A673 (cell line): ENCODE measurements at regions of chr10 and their contacts with region 1.

Region 1: DNA sequence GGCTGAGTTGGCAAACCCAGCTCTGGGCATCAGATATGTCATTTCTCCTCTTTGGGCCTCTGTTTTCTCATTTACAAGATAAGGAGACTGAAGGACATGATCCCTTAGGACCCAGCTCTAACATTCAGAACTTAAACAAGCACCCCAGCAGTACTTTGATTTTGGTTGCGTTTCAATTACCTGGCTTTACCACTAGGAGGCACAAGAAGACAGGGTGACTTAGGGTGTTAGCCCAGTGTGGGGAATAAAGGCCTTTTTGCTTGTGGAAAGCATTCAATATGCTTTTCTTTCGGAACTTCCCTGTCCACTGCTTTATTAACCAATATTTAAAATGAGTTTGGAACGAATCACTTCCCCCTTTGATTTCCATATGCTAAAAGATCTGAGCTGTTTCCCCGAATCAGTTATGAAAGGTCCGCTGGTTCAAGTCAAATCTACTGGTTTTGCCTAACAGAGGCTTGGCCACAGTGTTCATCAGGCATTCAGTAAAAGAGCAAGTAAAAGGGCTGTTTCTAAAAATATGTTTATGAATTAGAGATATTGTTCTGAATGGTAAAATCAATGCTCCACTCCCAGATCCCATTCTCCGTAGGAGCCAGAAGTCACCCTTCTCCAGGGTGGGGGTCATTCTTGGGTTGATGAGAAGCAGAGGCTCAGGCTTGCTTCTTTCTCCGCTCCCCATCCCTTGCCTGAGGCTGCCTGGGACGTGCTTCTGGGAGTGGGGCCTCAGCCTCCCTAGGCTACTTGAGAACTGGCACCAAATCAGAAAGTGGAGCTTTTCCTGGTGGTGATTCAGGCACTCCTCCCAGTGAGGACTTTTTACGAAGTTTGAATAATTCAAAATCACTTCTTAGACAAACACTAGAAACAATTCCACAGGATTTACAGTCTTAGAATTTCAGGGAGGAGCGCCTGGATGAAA is 105.5 kb downstream of the MYOF start:
- DNase-seq: peak; percentile 85
- H3K4me3 ChIP-seq: no peak overlapping the region
- H3K27ac ChIP-seq: no peak overlapping the region
- H3K4me1 ChIP-seq: peaks cover 11% of the 10 kb centered on the region
- H3K27me3 ChIP-seq: no peaks in the 10 kb centered on the region
- CTCF ChIP-seq: peak; percentile 86

Region 2: GRCh38 chr10:93458821-93459257 is 82.2 kb after region 1 on chr10:
- CTCF ChIA-PET with region 1: no interaction called
- POLR2A ChIA-PET with region 1: no interaction called
- intact Hi-C with region 1: no loop called
- DNase-seq: peak; percentile 87
- H3K4me3 ChIP-seq: no peak overlapping the region
- H3K27ac ChIP-seq: peak overlapping the region; percentile 63
- H3K4me1 ChIP-seq: peaks cover 16% of the 10 kb centered on the region
- H3K27me3 ChIP-seq: no peaks in the 10 kb centered on the region
- CTCF ChIP-seq: no peak

Region 3: GRCh38 chr10:93482145-93482834 is 105.7 kb after region 1 on chr10 and contains the start of gene MYOF:
- CTCF ChIA-PET with region 1: interaction called, 107 read pairs
- POLR2A ChIA-PET with region 1: interaction called, 3 read pairs
- intact Hi-C with region 1: loop called (anchors 1 kb)
- DNase-seq: peak; percentile 85
- H3K4me3 ChIP-seq: peak within 1 kb of the TSS; percentile 65
- H3K27ac ChIP-seq: peak within 1 kb of the TSS; percentile 58
- H3K4me1 ChIP-seq: no peaks in the 10 kb centered on the region
- H3K27me3 ChIP-seq: no peaks in the 10 kb centered on the region
- CTCF ChIP-seq: peak; percentile 65
- total RNA-seq, gene MYOF: 15.9 and 24.2 TPM in 2 replicates